Activated CD4-positive, alpha-beta memory T cell treated with anti-CD3 and anti-CD28 coated beads, Interleukin-2, amount 10 ng/mL, durations not matched to agents 7 days and 5 days (primary cell): ENCODE measurements at regions of chr11 and their contacts with region 1.

Region 1: GRCh38 chr11:125625630-125626287 is 796 bp downstream of the CHEK1 start:
- DNase-seq: peak; percentile 89
- H3K4me3 Mint-ChIP-seq: peak overlapping the region; percentile 98
- H3K27ac Mint-ChIP-seq: peak overlapping the region; percentile 92
- H3K4me1 Mint-ChIP-seq: peaks cover 37% of the 10 kb centered on the region
- H3K27me3 Mint-ChIP-seq: no peaks in the 10 kb centered on the region

Region 2: DNA sequence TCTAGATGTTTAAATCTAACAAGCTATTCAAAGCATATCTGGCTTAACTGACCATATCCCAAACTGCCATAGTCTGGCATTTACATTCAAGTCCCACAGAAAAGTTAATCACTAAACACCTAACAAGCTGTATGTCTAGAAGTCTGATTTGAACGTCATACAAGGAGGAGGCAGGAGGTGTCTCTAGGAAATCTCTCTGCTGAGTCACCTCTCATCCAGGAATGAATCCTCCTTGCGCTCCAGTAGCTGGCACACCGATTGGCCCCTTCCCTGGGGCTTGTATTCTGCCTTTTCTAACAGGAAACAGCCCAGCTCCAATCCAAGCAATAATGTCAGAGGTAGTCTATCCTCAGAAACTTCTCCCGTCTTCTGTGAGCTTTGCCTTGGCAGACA is 161.5 kb before region 1 on chr11:
- CTCF ChIA-PET with region 1: no interaction called
- POLR2A ChIA-PET with region 1: no interaction called
- DNase-seq: no peak
- H3K4me3 Mint-ChIP-seq: no peak overlapping the region
- H3K27ac Mint-ChIP-seq: no peak overlapping the region
- H3K4me1 Mint-ChIP-seq: no peaks in the 10 kb centered on the region
- H3K27me3 Mint-ChIP-seq: peaks cover 3% of the 10 kb centered on the region

Region 3: GRCh38 chr11:125568970-125569914 is 56.5 kb before region 1 on chr11 and contains the start of gene EI24:
- CTCF ChIA-PET with region 1: interaction called, 7 read pairs
- POLR2A ChIA-PET with region 1: interaction called, 28 read pairs
- DNase-seq: peak; percentile 90
- H3K4me3 Mint-ChIP-seq: peak within 1 kb of the TSS; percentile 95
- H3K27ac Mint-ChIP-seq: peak within 1 kb of the TSS; percentile 80
- H3K4me1 Mint-ChIP-seq: peaks cover 27% of the 10 kb centered on the region
- H3K27me3 Mint-ChIP-seq: no peaks in the 10 kb centered on the region
- total RNA-seq, gene EI24: 31.5 to 33.2 TPM

Region 4: GRCh38 chr11:125592305-125593112 is 33.2 kb before region 1 on chr11 and contains the start of gene STT3A:
- CTCF ChIA-PET with region 1: interaction called, 8 read pairs
- POLR2A ChIA-PET with region 1: interaction called, 97 read pairs
- DNase-seq: peak; percentile 98
- H3K4me3 Mint-ChIP-seq: peak within 1 kb of the TSS; percentile 96
- H3K27ac Mint-ChIP-seq: peak within 1 kb of the TSS; percentile 91
- H3K4me1 Mint-ChIP-seq: peaks cover 57% of the 10 kb centered on the region
- H3K27me3 Mint-ChIP-seq: no peaks in the 10 kb centered on the region
- total RNA-seq, gene STT3A: 123 TPM

Region 5: DNA sequence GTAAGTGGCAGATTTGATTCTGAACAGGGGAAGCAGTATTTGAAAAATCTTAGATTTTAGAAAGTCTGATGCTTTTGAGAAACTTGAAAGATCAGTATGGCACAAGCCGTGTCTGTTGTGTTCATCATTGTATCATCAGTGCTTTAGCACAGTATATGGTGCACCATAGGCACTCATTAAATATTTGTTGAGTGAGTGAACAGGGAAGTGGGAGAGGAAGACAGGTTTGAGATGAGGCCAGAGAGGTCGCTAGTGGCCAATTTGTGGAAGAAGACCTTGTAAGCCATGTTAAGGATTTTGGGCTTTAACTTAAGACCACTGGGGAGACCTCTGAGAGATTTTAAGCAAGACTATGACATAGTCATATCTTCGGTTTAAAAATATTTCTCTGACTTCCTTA is 12.1 kb after region 1 on chr11:
- CTCF ChIA-PET with region 1: interaction called, 5 read pairs
- POLR2A ChIA-PET with region 1: interaction called, 10 read pairs
- DNase-seq: no peak
- H3K4me3 Mint-ChIP-seq: no peak overlapping the region
- H3K27ac Mint-ChIP-seq: no peak overlapping the region
- H3K4me1 Mint-ChIP-seq: peaks cover 18% of the 10 kb centered on the region
- H3K27me3 Mint-ChIP-seq: no peaks in the 10 kb centered on the region

Region 6: GRCh38 chr11:125645871-125646270 is 20.1 kb after region 1 on chr11:
- CTCF ChIA-PET with region 1: no interaction called
- POLR2A ChIA-PET with region 1: interaction called, 11 read pairs
- DNase-seq: no peak
- H3K4me3 Mint-ChIP-seq: no peak overlapping the region
- H3K27ac Mint-ChIP-seq: no peak overlapping the region
- H3K4me1 Mint-ChIP-seq: peaks cover 19% of the 10 kb centered on the region
- H3K27me3 Mint-ChIP-seq: no peaks in the 10 kb centered on the region

Region 7: DNA sequence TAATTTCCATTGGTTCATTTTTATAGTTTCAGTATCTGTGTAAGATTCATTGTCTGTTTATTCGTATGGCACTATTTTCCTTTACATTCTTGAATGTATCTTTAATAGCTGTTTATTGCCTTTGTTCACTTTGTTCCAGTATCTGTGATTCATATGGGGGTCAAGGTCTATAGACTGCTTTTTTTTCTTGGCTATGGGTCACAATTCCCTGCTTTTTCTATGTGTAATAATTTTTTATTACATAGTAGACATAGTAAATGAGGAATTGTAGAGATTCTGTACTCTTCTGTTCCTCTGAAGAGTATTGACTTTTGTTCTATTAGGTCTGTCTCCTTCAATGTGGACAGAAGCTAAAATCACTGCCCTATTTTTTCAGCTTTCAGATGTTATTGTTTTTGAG is 44.4 kb after region 1 on chr11:
- CTCF ChIA-PET with region 1: no interaction called
- POLR2A ChIA-PET with region 1: no interaction called
- DNase-seq: no peak
- H3K4me3 Mint-ChIP-seq: no peak overlapping the region
- H3K27ac Mint-ChIP-seq: no peak overlapping the region
- H3K4me1 Mint-ChIP-seq: peaks cover 2% of the 10 kb centered on the region
- H3K27me3 Mint-ChIP-seq: no peaks in the 10 kb centered on the region

Region 8: DNA sequence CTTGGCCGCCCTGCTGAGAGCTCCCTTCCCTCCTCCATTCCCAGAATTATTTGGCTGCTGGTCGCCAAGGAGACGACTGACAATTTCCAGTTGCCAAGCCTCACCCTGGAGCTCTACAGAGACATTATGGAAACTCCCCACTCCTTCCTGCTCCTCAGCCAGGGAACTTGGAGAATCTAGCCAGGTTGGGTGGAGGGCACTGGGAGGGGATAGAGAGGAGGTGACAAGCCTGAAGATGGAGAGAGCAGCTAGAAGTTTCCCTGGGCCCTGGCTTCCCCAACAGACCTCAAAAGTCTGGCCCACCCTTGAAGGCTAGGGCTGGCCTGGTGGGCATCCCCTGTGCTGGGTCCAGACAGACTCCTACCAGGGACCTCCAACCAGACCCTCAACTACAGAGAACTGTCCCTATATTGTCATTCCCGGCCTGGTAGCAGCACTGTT is 313.3 kb after region 1 on chr11:
- CTCF ChIA-PET with region 1: no interaction called
- POLR2A ChIA-PET with region 1: no interaction called
- DNase-seq: no peak
- H3K4me3 Mint-ChIP-seq: no peak overlapping the region
- H3K27ac Mint-ChIP-seq: no peak overlapping the region
- H3K4me1 Mint-ChIP-seq: peaks cover 13% of the 10 kb centered on the region
- H3K27me3 Mint-ChIP-seq: no peaks in the 10 kb centered on the region